ENCODE measurements at regions of chr14 and their contacts with region 1.

Region 1: DNA sequence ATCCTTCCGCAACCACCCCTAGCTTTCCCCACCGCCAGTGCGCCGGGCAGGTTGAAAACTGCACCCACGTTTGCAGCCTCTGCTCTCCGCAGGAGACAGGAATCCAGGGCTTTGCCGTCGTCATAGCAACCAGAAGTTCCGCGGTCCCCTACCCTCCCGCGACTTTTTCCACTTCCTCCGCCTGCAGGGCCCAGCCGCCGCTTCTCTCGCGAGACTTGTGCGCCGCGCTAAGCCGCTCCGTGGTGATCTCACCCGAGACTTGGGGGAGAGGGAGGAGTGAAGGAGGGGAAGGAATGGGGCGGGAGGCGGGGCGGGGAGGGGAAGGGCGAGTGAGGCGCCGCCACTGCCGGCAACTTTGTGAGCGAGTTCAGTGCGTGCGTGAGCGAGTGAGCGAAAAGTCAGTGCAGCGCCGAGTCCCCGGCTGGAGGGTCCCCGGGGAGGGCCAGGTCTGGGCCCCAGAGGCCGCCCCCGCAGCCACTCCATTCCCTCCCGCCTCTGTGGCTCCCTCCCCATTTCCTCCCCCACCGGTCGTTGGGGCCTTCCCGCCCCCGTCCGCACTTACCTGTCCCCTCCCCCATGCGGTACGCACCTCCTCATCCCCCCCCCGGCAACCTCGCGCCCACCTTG is 413.0 kb downstream of the PCNX1 start:
- DNase-seq: peak; percentile 94 to 99 (median 98)
- ATAC-seq: peak; percentile 92
- H3K4me3 ChIP-seq: peak within 1 kb of the TSS; percentile 69
- H3K4me3 Mint-ChIP-seq: peak within 1 kb of the TSS; percentile 90 to 95 (median 94)
- H3K27ac ChIP-seq: peak within 1 kb of the TSS; percentile 94
- H3K27ac Mint-ChIP-seq: peak within 1 kb of the TSS; percentile 88 to 98 (median 95)
- H3K4me1 ChIP-seq: peaks cover 6 to 36% of the 10 kb centered on the region in 2 donors
- H3K4me1 Mint-ChIP-seq: peaks cover 28 to 48% (median 47%) of the 10 kb centered on the region in 7 donors
- H3K27me3 ChIP-seq: no peaks in the 10 kb centered on the region
- H3K27me3 Mint-ChIP-seq: peaks cover 0 to 3% (median 0%) of the 10 kb centered on the region in 5 donors

Region 2: GRCh38 chr14:70640938-70641547 is 679.2 kb before region 1 on chr14:
- CTCF ChIA-PET with region 1: no interaction called
- POLR2A ChIA-PET with region 1: no interaction called
- intact Hi-C with region 1: loop called in 1 of 2 experiments (anchors 10 kb)
- DNase-seq: peak; percentile 24 to 76 (median 62)
- ATAC-seq: peak; percentile 78
- H3K4me3 ChIP-seq: peak overlapping the region; percentile 75
- H3K4me3 Mint-ChIP-seq: peak overlapping the region; percentile 93 to 100 (median 98)
- H3K27ac ChIP-seq: peak overlapping the region; percentile 91
- H3K27ac Mint-ChIP-seq: peak overlapping the region; percentile 85 to 99 (median 94)
- H3K4me1 ChIP-seq: peaks cover 18 to 24% of the 10 kb centered on the region in 2 donors
- H3K4me1 Mint-ChIP-seq: peaks cover 36 to 59% (median 46%) of the 10 kb centered on the region in 7 donors
- H3K27me3 ChIP-seq: no peaks in the 10 kb centered on the region
- H3K27me3 Mint-ChIP-seq: no peaks in the 10 kb centered on the region

Region 3: GRCh38 chr14:70754989-70755388 is 565.2 kb before region 1 on chr14:
- CTCF ChIA-PET with region 1: no interaction called
- POLR2A ChIA-PET with region 1: no interaction called
- intact Hi-C with region 1: no loop called
- DNase-seq: no peak
- ATAC-seq: no peak
- H3K4me3 ChIP-seq: no peak overlapping the region
- H3K4me3 Mint-ChIP-seq: no peak overlapping the region
- H3K27ac ChIP-seq: no peak overlapping the region
- H3K27ac Mint-ChIP-seq: no peak overlapping the region
- H3K4me1 ChIP-seq: no peaks in the 10 kb centered on the region
- H3K4me1 Mint-ChIP-seq: no peaks in the 10 kb centered on the region
- H3K27me3 ChIP-seq: no peaks in the 10 kb centered on the region
- H3K27me3 Mint-ChIP-seq: no peaks in the 10 kb centered on the region

Region 4: DNA sequence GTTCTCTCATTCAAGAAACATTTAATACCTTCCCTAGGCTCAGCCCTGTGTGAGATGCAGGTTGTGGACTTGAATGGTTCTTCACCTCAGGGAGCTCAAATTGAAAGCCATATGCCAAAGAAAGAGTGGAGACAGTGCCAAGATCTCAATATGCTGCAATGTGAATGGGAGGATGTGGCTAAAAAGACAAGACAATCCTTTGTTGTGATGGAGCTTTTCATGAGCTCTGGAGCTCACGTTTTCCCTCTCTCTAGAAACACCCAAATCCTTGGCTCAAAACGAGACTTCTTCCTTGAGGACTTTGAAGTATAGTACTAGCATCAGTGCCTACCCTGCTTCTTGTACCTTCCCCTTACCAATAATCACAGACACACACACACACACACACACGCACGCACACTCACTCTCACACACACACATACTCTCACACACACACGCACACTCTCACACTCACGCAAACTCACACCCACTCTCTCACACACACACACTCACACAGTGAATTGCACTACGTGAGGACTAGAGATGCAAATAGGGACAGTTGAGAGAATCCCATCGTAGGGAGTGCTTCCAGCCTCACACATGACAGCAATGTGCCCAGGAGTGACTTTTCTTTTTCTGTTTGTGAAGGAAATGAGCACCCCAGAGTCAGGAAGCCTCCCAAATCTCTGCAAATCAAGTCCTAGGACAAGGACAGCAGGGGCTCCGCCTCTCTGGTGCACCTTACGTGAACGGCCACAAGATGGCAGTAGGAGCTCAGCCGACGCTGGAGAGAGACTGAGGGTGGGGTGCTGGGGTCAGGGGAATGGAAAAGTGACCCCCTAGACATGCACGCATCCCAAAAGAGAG is 181.5 kb before region 1 on chr14:
- CTCF ChIA-PET with region 1: interaction called, 3 read pairs
- POLR2A ChIA-PET with region 1: no interaction called
- intact Hi-C with region 1: loop called (anchors 1 kb)
- DNase-seq: peak; percentile 20 to 64 (median 46)
- ATAC-seq: peak; percentile 72
- H3K4me3 ChIP-seq: no peak overlapping the region
- H3K4me3 Mint-ChIP-seq: no peak overlapping the region
- H3K27ac ChIP-seq: no peak overlapping the region
- H3K27ac Mint-ChIP-seq: peak overlapping the region in 2 of 9 donors; percentile 1 to 36
- H3K4me1 ChIP-seq: peaks cover 7 to 20% of the 10 kb centered on the region in 2 donors
- H3K4me1 Mint-ChIP-seq: peaks cover 0 to 54% (median 6%) of the 10 kb centered on the region in 7 donors
- H3K27me3 ChIP-seq: no peaks in the 10 kb centered on the region
- H3K27me3 Mint-ChIP-seq: peaks cover 0 to 3% (median 0%) of the 10 kb centered on the region in 5 donors

Region 5: DNA sequence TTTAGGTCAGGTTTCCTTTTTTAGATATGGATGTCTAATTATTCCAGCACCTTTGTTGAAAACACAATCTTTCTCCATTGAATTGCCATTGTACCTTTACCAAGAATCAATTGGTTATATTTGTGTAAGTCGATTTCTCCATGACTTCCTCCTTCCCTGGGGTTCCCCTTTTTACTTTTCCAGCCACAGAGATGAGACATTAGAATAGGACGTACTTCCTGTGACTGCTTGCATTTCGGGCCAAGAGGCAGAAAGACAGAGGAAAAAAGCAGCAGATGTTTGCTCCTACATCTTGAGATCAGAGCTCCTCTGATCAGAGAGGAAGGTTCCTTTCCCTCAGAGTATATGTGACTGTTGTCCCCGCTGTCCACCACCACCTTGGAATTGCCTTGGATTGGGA is 158.3 kb after region 1 on chr14:
- CTCF ChIA-PET with region 1: no interaction called
- POLR2A ChIA-PET with region 1: no interaction called
- intact Hi-C with region 1: loop called in 1 of 2 experiments (anchors 2 kb)
- DNase-seq: peak in 3 of 9 donors; percentile 1 to 8 (median 2)
- ATAC-seq: peak; percentile 65
- H3K4me3 ChIP-seq: no peak overlapping the region
- H3K4me3 Mint-ChIP-seq: peak overlapping the region in 3 of 10 donors; percentile 2 to 58 (median 7)
- H3K27ac ChIP-seq: no peak overlapping the region
- H3K27ac Mint-ChIP-seq: peak overlapping the region in 3 of 9 donors; percentile 6 to 44 (median 16)
- H3K4me1 ChIP-seq: no peaks in the 10 kb centered on the region
- H3K4me1 Mint-ChIP-seq: peaks cover 7 to 51% (median 43%) of the 10 kb centered on the region in 7 donors
- H3K27me3 ChIP-seq: no peaks in the 10 kb centered on the region
- H3K27me3 Mint-ChIP-seq: no peaks in the 10 kb centered on the region

Region 6: DNA sequence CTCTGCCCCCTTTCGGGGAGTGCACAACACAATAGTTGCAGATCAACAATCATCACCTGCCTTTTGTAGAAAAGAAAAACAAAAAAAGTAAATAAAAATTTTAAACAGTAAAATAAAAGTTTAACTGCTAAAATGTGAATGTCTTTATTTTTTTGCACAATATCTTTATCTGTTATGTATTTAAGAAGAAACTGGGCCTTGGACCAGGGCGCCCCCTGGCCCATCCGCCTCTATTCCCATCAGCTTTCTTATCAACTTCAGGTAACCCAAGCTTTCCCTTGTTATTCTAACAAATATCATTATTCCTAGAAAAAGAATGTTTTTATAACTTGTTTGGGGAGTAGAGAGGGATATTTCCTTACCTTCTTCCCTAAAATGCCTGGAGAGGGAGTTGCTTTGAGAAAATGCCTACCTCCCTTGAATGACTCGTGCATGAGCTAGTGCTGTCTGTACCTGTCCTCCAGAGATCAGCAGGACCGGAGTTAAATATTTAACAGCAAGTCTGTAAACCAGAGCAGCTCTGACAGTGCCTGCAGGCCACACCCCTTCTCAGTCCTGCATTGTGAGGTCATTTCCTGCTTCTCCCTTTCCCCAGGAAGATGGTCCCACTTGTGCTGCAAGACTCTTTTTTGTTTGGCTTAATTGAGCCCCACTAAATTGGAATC is 419.2 kb after region 1 on chr14:
- CTCF ChIA-PET with region 1: interaction called, 5 read pairs
- POLR2A ChIA-PET with region 1: no interaction called
- intact Hi-C with region 1: loop called in 1 of 2 experiments (anchors 5 kb)
- DNase-seq: no peak
- ATAC-seq: no peak
- H3K4me3 ChIP-seq: no peak overlapping the region
- H3K4me3 Mint-ChIP-seq: no peak overlapping the region
- H3K27ac ChIP-seq: no peak overlapping the region
- H3K27ac Mint-ChIP-seq: peak overlapping the region in 3 of 9 donors; percentile 21 to 31 (median 29)
- H3K4me1 ChIP-seq: no peaks in the 10 kb centered on the region
- H3K4me1 Mint-ChIP-seq: peaks cover 0 to 10% (median 0%) of the 10 kb centered on the region in 7 donors
- H3K27me3 ChIP-seq: no peaks in the 10 kb centered on the region
- H3K27me3 Mint-ChIP-seq: no peaks in the 10 kb centered on the region

Region 7: DNA sequence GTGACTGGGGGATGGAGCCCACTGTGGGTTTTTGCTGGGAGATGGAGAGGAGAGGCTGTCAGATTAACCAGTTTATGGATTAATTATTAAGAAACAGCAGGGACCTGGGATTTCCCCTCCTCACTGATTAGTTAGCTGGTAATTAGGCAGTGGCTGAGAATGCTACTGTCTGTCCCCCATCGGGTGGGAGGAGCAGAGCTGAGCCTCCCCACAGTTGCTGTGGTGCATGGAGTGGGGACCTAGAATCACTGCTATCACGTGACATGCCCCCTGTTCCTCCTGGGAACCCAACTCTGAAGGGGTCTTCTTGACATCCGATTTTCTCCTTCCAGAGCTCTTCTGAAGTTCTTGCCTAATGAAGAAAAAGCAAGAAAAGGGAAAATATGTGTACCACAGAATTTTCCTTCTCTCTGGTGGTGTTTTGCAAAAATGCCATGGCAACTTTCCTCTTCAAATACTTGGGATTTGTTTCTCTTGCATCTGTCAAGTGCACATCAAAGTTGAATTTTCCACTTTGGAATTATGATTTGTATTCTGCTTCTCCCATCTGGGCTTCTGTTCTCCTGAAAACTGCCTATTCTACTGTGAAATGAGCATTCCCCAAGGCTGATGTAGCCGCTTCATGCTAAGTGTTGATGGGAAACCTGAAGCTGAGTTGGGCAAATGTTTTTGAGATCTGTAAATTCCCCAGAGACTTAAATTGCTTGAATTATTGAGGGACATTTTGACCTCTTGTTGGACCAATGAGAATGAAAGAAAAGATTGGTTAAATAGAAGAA is 876.2 kb after region 1 on chr14:
- CTCF ChIA-PET with region 1: no interaction called
- POLR2A ChIA-PET with region 1: no interaction called
- intact Hi-C with region 1: no loop called
- DNase-seq: no peak
- ATAC-seq: no peak
- H3K4me3 ChIP-seq: no peak overlapping the region
- H3K4me3 Mint-ChIP-seq: no peak overlapping the region
- H3K27ac ChIP-seq: no peak overlapping the region
- H3K27ac Mint-ChIP-seq: no peak overlapping the region
- H3K4me1 ChIP-seq: no peaks in the 10 kb centered on the region
- H3K4me1 Mint-ChIP-seq: peaks cover 0 to 1% (median 0%) of the 10 kb centered on the region in 7 donors
- H3K27me3 ChIP-seq: no peaks in the 10 kb centered on the region
- H3K27me3 Mint-ChIP-seq: peaks cover 0 to 22% (median 7%) of the 10 kb centered on the region in 5 donors

Region 8: DNA sequence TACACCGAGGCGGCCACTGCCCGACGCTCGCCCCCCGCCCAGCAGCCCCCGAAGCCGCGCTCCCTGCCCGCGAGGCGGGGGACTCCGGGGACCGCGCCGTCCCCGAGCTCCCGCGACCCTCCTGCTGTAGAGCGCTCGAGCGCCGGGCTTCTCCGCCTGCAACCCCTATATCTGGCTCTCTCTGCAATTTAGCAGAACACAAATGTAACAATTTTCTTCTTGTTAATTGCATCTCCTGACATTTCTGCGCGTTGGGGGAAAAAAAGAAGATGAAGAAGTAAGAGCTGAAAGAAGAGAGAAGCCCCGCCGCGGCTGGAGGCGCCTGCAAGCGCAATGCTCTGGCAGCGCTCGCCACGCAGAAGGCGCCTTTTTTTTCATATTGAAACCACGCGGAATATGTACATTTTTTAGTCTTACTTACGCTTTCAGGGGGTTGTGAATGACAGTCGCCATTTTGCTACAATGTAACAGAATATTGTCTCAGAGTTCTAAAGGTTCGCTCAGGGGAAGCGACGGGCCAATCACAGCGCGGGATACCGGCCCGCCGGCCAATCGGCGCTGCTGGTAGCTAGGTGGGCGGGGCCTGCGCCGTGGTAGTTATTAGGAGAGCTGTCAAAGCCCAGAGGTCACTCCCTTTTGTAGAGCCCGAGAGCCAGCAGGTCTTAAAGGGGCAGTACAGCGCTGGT is 1573.6 kb after region 1 on chr14 and contains the start of gene DPF3:
- CTCF ChIA-PET with region 1: no interaction called
- POLR2A ChIA-PET with region 1: no interaction called
- intact Hi-C with region 1: loop called in 1 of 2 experiments (anchors 5 kb)
- DNase-seq: peak; percentile 80 to 91 (median 86)
- ATAC-seq: peak; percentile 99
- H3K4me3 ChIP-seq: peak within 1 kb of the TSS; percentile 74
- H3K4me3 Mint-ChIP-seq: peak within 1 kb of the TSS; percentile 91 to 99 (median 97)
- H3K27ac ChIP-seq: peak within 1 kb of the TSS; percentile 51
- H3K27ac Mint-ChIP-seq: peak within 1 kb of the TSS; percentile 22 to 94 (median 56)
- H3K4me1 ChIP-seq: peaks cover 9 to 20% of the 10 kb centered on the region in 2 donors
- H3K4me1 Mint-ChIP-seq: peaks cover 20 to 36% (median 24%) of the 10 kb centered on the region in 7 donors
- H3K27me3 ChIP-seq: peaks cover 6 to 10% of the 10 kb centered on the region in 2 donors
- H3K27me3 Mint-ChIP-seq: peaks cover 37 to 72% (median 53%) of the 10 kb centered on the region in 5 donors
- total RNA-seq, gene DPF3: 0.24 to 5.5 (median 0.61) TPM in 4 of 5 experiments, not detected in the other

Measured in naive thymus-derived CD4-positive, alpha-beta T cell (primary cell).